ENCODE measurements at regions of chr6 and their contacts with region 1.

Region 1: DNA sequence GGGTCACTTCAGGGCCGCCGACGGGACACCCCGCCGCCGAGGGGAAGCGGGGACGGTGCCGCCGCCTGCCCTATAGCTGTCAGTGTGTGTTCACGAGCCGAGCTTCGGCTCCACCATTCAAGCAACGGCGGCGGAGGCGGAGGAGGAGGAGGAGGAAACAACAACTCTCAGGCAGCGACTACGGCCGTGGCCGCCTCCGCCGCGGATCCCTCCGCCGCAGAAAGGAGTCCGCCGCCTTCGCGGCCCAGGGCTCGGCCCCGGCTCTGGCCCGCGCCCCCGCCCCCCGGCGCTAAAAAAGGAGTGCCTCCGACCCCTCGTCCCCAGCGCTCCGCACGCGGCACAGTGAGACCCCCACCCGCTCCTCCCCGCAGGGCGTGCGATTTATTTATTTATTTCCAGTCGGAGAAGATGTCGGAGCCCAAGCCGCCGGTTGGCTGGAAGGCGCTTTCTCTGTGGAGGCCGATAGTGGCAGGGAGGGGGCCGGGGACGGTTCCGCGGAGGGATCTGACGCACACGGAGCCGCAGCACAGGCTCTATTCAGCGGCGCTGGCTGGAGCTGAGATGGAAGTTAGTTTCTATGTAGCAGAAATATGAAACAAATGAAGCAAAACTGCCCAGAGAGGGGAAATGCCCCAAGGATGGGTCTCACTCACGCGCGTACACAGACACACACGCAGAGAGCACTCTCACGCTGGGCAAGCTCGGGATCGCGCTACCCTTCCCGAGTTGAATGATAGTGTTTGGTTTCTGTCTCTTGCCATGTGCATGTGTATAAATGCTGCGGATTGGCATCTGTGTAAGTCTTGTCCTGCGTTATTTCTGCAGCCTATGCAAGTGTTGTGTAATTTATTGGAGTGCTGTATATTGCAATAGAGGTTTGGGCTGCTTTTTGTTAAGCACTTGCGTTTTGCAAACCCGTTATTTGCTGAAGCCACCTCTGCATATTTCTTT is at the start of gene PHIP:
- DNase-seq: peak; percentile 96
- total RNA-seq, gene PHIP: 16.8 TPM

Region 2: GRCh38 chr6:78867370-78868040 is 210.8 kb before region 1 on chr6 and contains the start of gene IRAK1BP1:
- intact Hi-C with region 1: loop called (anchors 2 kb)
- DNase-seq: peak; percentile 92
- total RNA-seq, gene IRAK1BP1: 2.1 TPM

Region 3: DNA sequence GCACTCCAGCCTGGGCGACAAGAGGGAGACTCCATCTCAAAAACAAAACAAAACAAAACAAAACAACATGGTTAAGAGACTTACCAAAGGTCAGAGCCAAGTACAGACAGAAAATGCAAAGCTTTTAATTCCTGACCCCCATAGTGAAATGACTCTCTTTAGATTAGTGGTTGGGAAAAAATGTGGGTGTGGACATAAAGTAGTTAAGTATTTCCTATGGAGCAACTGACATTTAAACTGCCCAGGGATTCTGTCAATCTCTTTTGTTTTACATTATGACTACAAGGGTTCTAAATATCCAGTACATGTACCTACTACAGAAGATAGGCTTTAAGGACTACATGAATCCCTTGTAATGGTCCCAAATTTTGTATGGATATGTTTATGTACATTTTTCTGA is 135.9 kb before region 1 on chr6:
- intact Hi-C with region 1: no loop called
- DNase-seq: no peak

Region 4: DNA sequence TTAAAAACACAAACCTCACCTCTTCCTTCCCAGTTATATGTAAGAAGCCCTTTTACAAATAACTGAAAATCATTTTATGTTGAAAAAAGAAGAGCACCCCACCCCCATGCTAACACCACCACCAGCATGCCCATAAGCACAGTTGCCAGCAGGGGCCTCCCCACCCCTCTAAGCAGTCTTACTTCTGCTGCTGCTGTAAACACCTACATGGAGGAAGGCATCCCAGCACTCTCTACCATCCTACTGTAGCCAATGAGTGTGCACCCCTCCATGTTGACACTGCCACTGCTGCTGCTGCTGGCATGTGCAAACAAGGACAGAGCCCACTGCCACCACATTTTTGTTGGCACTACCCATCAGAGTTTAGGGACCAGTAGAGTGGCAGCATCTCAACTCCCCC is 49.3 kb after region 1 on chr6:
- intact Hi-C with region 1: no loop called
- DNase-seq: peak; percentile 64

Region 5: DNA sequence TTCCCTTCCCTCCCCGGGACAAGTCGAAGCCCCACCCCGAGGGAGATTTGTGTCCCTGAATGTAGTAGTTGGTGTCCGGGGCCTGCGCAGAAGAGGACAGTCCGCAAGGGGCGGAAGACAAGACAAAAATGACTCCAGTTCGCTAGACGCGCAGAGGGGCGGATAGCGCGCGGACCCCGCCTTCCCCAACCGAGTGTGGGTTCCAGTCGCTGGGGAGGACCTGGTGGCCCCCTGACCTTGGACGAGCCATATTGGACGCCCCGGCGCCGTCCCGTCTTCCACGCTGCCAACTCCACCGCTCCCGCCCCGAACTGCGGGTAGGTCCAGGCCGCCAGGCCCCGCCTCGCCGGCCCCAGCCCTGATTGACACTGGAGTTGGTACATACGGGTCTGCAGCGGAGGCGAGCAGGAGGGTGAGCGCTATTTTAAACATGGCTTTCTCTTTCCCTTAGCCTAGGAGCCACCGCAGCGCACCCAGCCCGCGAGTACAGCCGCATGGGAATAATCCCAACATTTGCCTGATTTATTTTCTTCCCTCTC is 155.3 kb after region 1 on chr6:
- intact Hi-C with region 1: loop called (anchors 1 kb)
- DNase-seq: peak; percentile 94

Region 6: DNA sequence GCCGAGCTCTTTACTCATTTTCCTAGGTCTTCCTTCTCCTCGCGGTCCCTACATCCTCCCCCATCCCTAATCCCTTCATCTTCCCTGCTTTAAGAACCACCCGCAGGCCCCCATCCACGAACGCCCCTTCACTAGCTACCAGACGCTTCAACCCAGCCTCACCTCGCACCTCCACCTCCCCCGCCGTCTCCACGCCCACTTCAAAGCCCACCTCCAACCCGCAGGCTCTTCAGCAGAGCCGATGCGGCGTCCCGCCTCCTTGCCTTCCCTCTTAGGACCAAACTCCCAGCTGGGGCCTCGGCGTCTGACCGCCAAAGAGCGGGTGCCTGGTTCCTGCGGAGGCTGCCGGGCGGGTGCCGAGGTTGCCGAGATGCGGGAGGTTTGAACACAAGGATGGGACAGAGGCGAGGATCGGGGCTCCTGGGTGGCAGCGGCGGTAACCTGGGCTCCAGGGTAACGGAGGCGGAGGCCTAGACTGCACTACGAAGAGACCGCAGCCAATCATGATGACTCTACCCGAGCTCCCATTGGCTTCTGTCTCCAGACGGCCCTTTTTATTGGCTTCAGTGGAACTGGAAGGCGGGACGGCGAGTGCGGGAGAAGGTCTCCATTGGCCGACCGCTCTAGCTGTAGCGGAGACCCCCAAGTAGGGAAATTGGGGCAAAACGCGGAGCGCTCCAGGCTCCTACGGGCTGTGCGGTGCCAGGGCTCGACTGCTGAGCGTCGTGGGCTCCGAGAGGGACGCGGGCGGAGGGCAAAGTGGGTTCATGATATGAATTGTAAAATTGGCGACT is 458.8 kb after region 1 on chr6 and contains the start of gene LCA5:
- intact Hi-C with region 1: loop called (anchors 2 kb)
- DNase-seq: peak; percentile 96
- total RNA-seq, gene LCA5: 2.6 TPM